Spleen (tissue), 13 donors: ENCODE measurements at regions of chr5 and their contacts with region 1.

Region 1: GRCh38 chr5:42811591-42812446 is at the start of gene SELENOP:
- DNase-seq: no peak
- H3K4me3 ChIP-seq: peak within 1 kb of the TSS; percentile 24 to 73 (median 43)
- H3K27ac ChIP-seq: peak within 1 kb of the TSS; percentile 4 to 88 (median 76)
- H3K4me1 ChIP-seq: peaks cover 0 to 27% (median 13%) of the 10 kb centered on the region in 6 donors
- H3K27me3 ChIP-seq: no peaks in the 10 kb centered on the region
- CTCF ChIP-seq: no peak
- POLR2A ChIP-seq: peak in 2 of 3 donors; percentile 79 to 96
- total RNA-seq, gene SELENOP: 411 to 2,596 (median 1,474) TPM

Region 2: DNA sequence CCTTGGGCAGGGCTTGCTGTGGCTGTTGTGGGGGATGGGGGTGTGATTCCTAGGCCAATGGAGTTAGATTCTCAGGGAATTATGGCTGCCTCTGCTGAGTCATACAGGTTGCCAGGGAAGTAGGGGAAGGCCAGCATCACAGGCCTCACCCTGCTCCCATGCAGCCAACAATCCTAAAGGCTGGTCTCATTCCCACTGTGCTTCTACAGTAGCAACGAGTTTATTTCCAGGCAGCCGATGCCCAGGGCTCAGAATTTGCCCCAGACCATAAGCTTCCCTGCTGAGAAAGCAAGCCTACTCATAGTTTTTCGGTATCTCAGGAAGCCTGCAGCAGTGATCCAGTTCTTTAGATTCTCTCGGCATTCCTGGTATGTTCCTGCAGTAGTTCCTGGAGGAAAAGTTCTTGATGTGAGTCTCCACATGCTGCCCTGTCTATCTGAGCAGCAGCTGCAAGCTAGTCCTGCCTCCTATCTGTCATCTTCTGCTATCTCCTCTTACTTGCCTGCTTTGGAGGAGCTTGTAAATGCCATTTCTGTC is 59.1 kb after region 1 on chr5:
- intact Hi-C with region 1: loop called (anchors 10 kb)
- DNase-seq: no peak
- H3K4me3 ChIP-seq: no peak overlapping the region
- H3K27ac ChIP-seq: no peak overlapping the region
- H3K4me1 ChIP-seq: peaks cover 0 to 7% (median 6%) of the 10 kb centered on the region in 6 donors
- H3K27me3 ChIP-seq: no peaks in the 10 kb centered on the region
- CTCF ChIP-seq: no peak
- POLR2A ChIP-seq: no peak